ENCODE measurements at regions of chr9 and their contacts with region 1.

Region 1: DNA sequence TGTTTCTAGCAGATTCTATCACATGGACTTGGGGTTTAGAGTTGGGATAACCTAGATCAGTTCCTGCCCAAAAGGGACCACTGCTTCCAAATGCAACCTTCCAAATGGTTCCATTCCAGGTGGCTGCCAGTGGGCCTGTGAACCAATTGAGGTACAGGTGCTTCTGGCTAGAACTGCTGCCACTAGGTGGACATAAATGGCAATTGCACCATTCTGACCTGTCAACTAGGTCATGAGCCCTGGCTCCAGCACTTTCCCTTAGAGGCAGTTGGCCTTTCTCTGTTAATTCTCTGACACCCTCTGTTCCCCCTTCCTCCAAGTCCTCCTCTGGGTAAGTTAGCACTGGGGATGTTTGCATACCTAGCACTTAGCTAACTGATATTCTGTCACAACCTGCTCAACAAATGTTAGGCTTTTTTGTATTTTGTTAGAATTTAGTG is 16.6 kb upstream of the HEMGN start:
- DNase-seq: peak; percentile 70 to 76
- ATAC-seq: peak; percentile 94 to 98
- H3K4me3 ChIP-seq: no peak overlapping the region
- H3K27ac ChIP-seq: no peak overlapping the region
- H3K4me1 ChIP-seq: no peaks in the 10 kb centered on the region
- CTCF ChIP-seq: peak; percentile 57
- EP300 ChIP-seq: no peak
- POLR2A ChIP-seq: no peak
- RAD21 ChIP-seq: peak; percentile 53 to 56

Region 2: DNA sequence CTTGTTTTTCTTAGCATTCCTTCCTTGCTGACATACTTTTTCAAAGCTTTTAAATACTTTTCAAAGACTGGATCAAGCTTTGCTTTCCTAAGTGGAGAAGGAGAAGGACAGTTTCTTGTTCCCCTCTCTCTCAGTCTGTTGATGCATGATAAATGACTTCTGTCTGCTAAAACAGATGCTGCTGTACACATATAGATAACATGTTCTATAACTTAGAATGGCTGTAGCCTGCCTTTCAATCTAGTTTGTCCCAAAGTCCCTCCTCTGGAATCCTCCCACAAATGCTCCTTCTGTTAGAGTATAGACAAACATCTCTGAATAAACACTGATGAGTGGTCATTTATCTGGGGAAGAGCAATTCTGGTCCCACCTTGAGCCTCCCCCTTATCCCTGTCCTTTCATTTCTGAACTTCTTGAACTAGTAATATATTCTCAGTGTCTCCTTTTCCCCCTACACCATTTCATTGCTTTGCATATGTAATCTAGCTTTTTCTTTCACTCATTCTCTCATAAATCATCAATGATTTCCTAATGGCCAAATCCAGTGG is 11.2 kb before region 1 on chr9:
- CTCF ChIA-PET with region 1: interaction called, 27 read pairs
- POLR2A ChIA-PET with region 1: interaction called, 3 read pairs
- DNase-seq: no peak
- ATAC-seq: no peak
- H3K4me3 ChIP-seq: no peak overlapping the region
- H3K27ac ChIP-seq: no peak overlapping the region
- H3K4me1 ChIP-seq: no peaks in the 10 kb centered on the region
- CTCF ChIP-seq: no peak
- EP300 ChIP-seq: no peak
- POLR2A ChIP-seq: no peak
- RAD21 ChIP-seq: no peak

Region 3: GRCh38 chr9:97966493-97966892 is 11.9 kb after region 1 on chr9:
- CTCF ChIA-PET with region 1: interaction called, 15 read pairs
- POLR2A ChIA-PET with region 1: no interaction called
- DNase-seq: no peak
- ATAC-seq: no peak
- H3K4me3 ChIP-seq: no peak overlapping the region
- H3K27ac ChIP-seq: no peak overlapping the region
- H3K4me1 ChIP-seq: no peaks in the 10 kb centered on the region
- CTCF ChIP-seq: no peak
- EP300 ChIP-seq: no peak
- POLR2A ChIP-seq: no peak
- RAD21 ChIP-seq: no peak

Region 4: DNA sequence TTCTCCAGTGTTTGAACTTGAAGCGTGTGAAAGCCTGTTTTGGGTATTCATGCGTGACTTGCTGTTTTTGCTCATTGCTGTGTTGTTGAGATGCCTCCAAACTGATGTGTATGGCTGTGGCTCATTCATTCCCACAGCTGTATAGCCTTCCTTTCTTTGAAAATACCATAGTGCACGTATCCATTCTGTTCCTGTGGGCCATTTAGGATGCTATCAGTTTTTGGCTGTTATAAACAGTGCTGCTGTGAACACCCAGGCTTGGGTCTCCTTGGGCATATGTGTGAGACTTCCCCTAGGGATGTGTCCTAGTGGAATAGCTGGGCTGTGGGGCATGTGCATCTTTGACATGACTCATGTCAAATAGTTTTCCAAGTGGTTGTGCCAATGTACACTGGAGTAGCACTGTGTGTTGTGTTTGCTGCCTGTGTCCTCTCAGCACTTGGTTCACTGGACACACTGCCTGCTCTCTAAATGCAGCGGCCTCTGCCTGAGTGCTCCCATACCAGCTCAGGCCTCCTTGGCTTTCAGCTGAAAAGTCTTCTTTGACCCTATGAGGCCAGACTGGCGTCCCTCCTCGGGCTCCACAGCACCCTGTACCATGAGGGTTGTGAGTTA is 403.5 kb after region 1 on chr9:
- CTCF ChIA-PET with region 1: no interaction called
- POLR2A ChIA-PET with region 1: no interaction called
- DNase-seq: peak in 1 of 2 experiments; percentile 20
- ATAC-seq: peak; percentile 64 to 71; a peak in 4 of 6 replicates
- H3K4me3 ChIP-seq: no peak overlapping the region
- H3K27ac ChIP-seq: no peak overlapping the region
- H3K4me1 ChIP-seq: no peaks in the 10 kb centered on the region
- CTCF ChIP-seq: no peak
- EP300 ChIP-seq: no peak
- POLR2A ChIP-seq: no peak
- RAD21 ChIP-seq: no peak